ENCODE measurements at regions of chr6 and their contacts with region 1.

Region 1: DNA sequence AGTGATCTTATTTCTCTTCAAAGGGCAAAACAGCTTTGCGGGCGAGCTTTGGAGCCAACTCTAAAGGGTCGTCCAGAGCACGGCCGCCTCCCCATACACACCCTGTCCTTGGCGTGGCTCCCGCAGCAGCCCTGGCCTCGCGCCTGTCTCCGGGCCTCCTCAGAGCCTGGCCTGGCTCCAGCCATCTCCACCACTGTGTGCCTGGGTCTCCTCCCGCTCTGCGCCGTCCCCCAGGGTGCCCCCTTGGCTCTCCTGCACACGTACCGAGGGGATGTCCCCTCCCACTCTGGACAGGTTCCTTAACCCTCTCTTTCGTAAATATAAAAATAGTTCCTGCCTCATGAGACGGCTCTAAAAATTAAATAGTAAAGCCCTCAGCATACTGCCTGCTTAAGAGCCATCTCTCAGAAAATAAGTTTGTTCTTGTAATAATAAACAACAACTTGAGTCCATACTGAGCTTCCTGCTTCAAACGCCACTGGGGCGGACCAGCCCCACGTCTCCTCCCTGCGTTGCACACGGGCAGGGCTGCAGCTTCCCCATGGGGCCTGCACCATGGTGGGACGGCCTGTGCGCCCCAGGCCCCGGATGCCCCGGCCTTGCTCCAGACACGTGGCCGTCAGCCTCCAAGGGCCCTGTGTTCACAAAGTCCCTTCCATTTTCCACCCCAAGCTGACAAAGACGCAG is 226.2 kb downstream of the TTLL2 start:
- DNase-seq: peak in 1 of 2 donors; percentile 92
- H3K4me3 ChIP-seq: peak overlapping the region in 1 of 2 donors; percentile 9
- H3K27ac ChIP-seq: peak overlapping the region; percentile 90 to 91
- H3K4me1 ChIP-seq: peaks cover 13 to 46% of the 10 kb centered on the region in 2 donors
- H3K27me3 ChIP-seq: no peaks in the 10 kb centered on the region
- CTCF ChIP-seq: no peak

Region 2: DNA sequence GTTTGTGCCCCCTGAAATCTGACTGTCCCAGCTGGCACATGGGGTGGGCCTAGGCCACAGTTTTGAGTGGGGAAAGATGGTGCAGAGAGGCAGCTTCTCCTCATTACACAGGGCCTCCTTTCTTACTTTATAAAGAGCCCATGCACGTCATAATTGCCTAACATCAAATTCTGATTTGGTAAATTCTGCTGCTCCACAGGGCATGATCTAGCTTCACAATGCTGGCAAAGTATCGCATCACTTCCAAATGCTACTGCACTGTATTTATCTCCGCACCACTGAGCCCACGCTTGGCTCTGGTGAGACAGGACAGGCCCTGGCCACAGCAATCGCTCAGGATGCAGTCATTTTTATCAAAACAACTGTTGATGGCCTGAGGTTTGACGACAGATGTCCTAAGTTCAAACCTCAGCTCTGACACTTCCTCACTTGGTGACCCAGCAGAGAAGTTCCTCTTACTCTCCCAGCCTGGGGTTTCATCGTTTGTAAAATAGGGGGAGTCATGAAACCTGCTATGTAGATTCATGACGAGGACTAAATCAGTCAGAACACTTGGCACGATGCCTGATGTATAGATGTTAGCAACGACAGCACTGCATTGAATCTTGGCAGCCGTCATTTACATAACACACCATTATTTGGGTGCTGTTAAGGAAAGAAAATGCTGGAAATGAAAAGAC is 38.2 kb before region 1 on chr6:
- intact Hi-C with region 1: no loop called
- DNase-seq: no peak
- H3K4me3 ChIP-seq: no peak overlapping the region
- H3K27ac ChIP-seq: no peak overlapping the region
- H3K4me1 ChIP-seq: no peaks in the 10 kb centered on the region
- H3K27me3 ChIP-seq: no peaks in the 10 kb centered on the region
- CTCF ChIP-seq: no peak

Region 3: GRCh38 chr6:167572841-167573271 is 21.8 kb after region 1 on chr6:
- intact Hi-C with region 1: loop called (anchors 1 kb)
- DNase-seq: no peak
- H3K4me3 ChIP-seq: peak overlapping the region; percentile 3 to 41
- H3K27ac ChIP-seq: peak overlapping the region; percentile 84 to 87
- H3K4me1 ChIP-seq: peaks cover 4 to 20% of the 10 kb centered on the region in 2 donors
- H3K27me3 ChIP-seq: no peaks in the 10 kb centered on the region
- CTCF ChIP-seq: no peak

Region 4: GRCh38 chr6:167826230-167826895 is 275.3 kb after region 1 on chr6:
- intact Hi-C with region 1: loop called (anchors 5 kb)
- DNase-seq: peak in 1 of 2 donors; percentile 85
- H3K4me3 ChIP-seq: peak overlapping the region; percentile 82 to 97
- H3K27ac ChIP-seq: peak overlapping the region; percentile 21 to 36
- H3K4me1 ChIP-seq: peaks cover 9 to 12% of the 10 kb centered on the region in 2 donors
- H3K27me3 ChIP-seq: no peaks in the 10 kb centered on the region
- CTCF ChIP-seq: peak; percentile 31 to 62 (median 36)

Measured in ascending aorta (tissue), 2 donors.